BJ (cell line): ENCODE measurements at regions of chr5 and their contacts with region 1.

Region 1: GRCh38 chr5:127492854-127493738 is 24.3 kb upstream of the PRRC1 start:
- DNase-seq: peak; percentile 13
- H3K4me3 ChIP-seq: no peak overlapping the region
- H3K27me3 ChIP-seq: peaks cover 5% of the 10 kb centered on the region
- CTCF ChIP-seq: peak; percentile 75

Region 2: GRCh38 chr5:126837906-126838539 is 655.1 kb before region 1 on chr5:
- CTCF ChIA-PET with region 1: interaction called, 10 read pairs
- POLR2A ChIA-PET with region 1: no interaction called
- DNase-seq: no peak
- H3K4me3 ChIP-seq: no peak overlapping the region
- H3K27me3 ChIP-seq: no peaks in the 10 kb centered on the region
- CTCF ChIP-seq: peak; percentile 44

Region 3: DNA sequence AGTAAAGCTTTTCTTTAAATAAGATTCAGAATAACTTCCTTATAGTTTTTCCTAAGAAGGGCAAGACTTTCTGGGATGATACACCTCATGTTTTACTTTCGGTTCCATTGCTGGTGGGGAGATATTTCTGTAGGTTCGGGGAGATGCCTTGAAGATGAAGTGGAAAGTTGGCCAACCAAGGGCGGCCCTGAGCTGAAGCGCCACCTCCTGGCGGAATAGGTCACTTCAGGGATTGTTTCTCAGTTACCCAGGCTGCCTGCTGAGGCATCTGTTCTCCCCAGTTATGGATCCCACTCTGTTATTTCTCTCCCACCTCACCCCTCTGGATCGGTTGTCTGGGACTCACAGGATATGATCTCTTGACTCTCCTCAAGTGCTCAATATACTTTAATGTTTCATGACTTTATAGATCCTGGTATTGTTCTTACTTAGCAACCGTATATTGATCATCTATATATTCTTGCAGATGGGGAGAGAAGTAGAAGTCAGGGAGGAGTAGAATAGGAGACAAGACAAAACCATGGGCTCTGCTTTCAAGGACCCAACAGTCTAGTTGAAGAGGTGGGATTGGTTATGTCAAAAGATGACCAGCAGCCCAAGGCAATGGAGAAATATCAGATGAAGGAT is 179.1 kb before region 1 on chr5:
- CTCF ChIA-PET with region 1: interaction called, 10 read pairs
- POLR2A ChIA-PET with region 1: no interaction called
- DNase-seq: no peak
- H3K4me3 ChIP-seq: no peak overlapping the region
- H3K27me3 ChIP-seq: peaks cover 7% of the 10 kb centered on the region
- CTCF ChIP-seq: peak; percentile 88

Region 4: GRCh38 chr5:127471211-127471610 is 21.9 kb before region 1 on chr5:
- CTCF ChIA-PET with region 1: interaction called, 15 read pairs
- POLR2A ChIA-PET with region 1: no interaction called
- DNase-seq: no peak
- H3K4me3 ChIP-seq: no peak overlapping the region
- H3K27me3 ChIP-seq: 0 out of 2 replicates have a peak, but pooled peaks cover 3% of the 10 kb centered on the region
- CTCF ChIP-seq: no peak